ENCODE measurements at regions of chr2 and their contacts with region 1.

Region 1: DNA sequence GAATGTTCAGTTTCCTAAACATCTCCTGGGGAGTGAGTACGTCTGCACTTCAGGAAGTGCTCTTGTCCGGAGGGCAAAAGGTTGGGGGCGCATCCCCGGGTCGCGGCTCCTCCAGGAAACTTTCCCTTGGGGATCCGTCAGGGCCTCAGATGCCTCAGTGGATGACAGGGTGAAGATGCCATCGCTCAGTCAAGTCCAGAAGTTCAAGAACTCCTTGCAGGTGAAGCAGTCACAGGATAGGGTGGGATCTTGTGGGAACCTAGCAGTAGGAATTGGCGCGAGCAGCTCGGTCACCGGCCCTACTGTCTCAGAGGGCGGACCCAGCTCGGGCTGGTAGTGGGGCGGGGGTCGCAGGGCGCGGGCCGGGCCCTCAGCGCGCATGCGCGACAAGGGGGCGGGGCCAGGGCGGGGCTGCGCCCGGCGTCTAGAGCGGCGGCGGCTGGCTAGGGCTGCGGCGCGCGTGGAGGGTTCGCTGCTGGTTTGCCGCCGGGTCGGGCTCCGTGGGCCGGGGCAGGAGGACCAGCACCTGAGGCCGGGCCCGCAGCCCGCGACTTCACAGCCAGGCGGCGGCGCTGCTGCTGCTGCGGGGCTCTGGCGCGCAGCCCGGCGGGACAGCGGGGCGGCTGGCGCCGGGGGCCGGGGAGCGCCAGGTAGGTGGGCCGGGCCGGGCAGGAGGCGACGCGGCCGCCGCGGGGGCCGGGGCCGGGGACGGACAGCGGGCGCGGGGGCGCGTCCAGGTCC is at the start of gene INPP4A:
- DNase-seq: peak; percentile 71
- H3K4me3 Mint-ChIP-seq: peak within 1 kb of the TSS; percentile 95
- H3K27ac Mint-ChIP-seq: peak within 1 kb of the TSS; percentile 93
- H3K4me1 Mint-ChIP-seq: peaks cover 56% of the 10 kb centered on the region
- H3K27me3 Mint-ChIP-seq: no peaks in the 10 kb centered on the region
- total RNA-seq, gene INPP4A: 54.6 and 55.7 TPM in 2 replicates

Region 2: DNA sequence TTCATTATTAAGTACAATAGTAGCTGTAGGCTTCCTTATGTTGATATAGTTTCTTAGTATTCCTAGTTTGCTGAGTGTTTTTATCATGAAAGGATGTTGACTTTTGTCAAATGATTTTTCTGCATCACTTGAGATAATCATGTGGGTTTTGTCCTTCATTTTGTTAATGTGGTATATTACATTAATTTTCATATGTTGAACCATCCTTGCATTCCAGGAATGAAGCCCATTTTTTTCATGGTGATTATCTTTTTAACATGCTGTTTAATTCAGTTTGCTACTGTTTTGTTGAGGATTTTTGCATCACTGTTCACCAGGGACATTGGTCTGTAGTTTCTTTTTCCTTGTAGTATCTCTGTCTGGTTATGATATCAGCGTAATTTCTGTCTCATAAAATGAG is 181.2 kb before region 1 on chr2:
- intact Hi-C with region 1: no loop called
- DNase-seq: no peak
- H3K4me3 Mint-ChIP-seq: no peak overlapping the region
- H3K27ac Mint-ChIP-seq: no peak overlapping the region
- H3K4me1 Mint-ChIP-seq: no peaks in the 10 kb centered on the region
- H3K27me3 Mint-ChIP-seq: peaks cover 20% of the 10 kb centered on the region

Region 3: GRCh38 chr2:98455494-98455976 is 10.9 kb after region 1 on chr2:
- intact Hi-C with region 1: loop called (anchors 1 kb)
- DNase-seq: no peak
- H3K4me3 Mint-ChIP-seq: peak overlapping the region; percentile 68
- H3K27ac Mint-ChIP-seq: peak overlapping the region; percentile 98
- H3K4me1 Mint-ChIP-seq: peaks cover 97% of the 10 kb centered on the region
- H3K27me3 Mint-ChIP-seq: no peaks in the 10 kb centered on the region

Region 4: GRCh38 chr2:98508709-98509066 is 64.1 kb after region 1 on chr2:
- intact Hi-C with region 1: loop called (anchors 1 kb)
- DNase-seq: peak; percentile 43
- H3K4me3 Mint-ChIP-seq: peak overlapping the region; percentile 31
- H3K27ac Mint-ChIP-seq: peak overlapping the region; percentile 91
- H3K4me1 Mint-ChIP-seq: peaks cover 77% of the 10 kb centered on the region
- H3K27me3 Mint-ChIP-seq: no peaks in the 10 kb centered on the region

Region 5: GRCh38 chr2:99154643-99155536 is 710.3 kb after region 1 on chr2 and contains the starts of genes LIPT1 and TSGA10:
- intact Hi-C with region 1: loop called (anchors 10 kb)
- DNase-seq: peak; percentile 92
- H3K4me3 Mint-ChIP-seq: no peak within 1 kb of the TSS
- H3K27ac Mint-ChIP-seq: peak within 1 kb of the TSS; percentile 95
- H3K4me1 Mint-ChIP-seq: peaks cover 31% of the 10 kb centered on the region
- H3K27me3 Mint-ChIP-seq: no peaks in the 10 kb centered on the region
- total RNA-seq, gene LIPT1: 2.2 and 3.3 TPM in 2 replicates
- total RNA-seq, gene TSGA10: 3.0 and 4.1 TPM in 2 replicates